ENCODE measurements at regions of chr1 and their contacts with region 1.

Region 1: DNA sequence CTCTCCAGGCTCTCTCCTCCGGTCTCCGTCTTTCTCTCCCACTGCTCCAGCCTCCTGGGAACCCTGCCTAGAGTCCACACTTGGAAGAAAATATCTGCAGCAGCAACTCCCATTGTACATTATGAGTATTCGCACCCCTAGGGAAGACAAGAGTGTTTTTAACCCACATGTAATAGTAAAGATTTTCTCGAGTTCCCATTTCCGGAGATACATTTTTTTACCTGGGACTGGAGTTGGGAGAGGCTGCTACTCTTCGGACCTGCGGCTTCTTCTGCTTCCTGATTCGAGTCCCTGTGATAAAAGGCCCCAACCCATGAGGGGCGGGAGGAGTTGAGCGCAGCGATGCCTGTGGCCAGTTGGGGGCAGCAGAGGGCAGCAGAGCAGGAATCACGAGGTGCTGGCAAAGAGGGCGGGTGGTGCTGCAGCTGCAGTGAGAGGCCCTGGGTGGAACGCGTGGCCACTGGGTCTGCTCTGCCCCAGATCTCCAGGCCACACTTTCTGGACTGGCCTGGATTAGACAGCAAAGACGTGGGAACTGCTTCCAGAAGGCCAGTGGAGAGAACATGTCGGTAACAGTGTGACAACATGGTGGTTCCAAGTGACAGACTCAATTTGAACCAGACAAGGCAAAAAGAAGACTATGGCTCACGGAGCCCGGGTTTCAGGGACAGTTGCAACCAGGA is 221.0 kb upstream of the CSF3R start:
- DNase-seq: peak in 4 of 5 donors; percentile 18 to 36 (median 26)
- H3K4me3 ChIP-seq: no peak overlapping the region
- H3K4me3 Mint-ChIP-seq: peak overlapping the region in 2 of 8 donors; percentile 14 to 43
- H3K27ac ChIP-seq: no peak overlapping the region
- H3K27ac Mint-ChIP-seq: no peak overlapping the region
- H3K4me1 ChIP-seq: no peaks in the 10 kb centered on the region
- H3K4me1 Mint-ChIP-seq: peaks cover 2 to 10% (median 7%) of the 10 kb centered on the region in 4 donors
- H3K27me3 ChIP-seq: no peaks in the 10 kb centered on the region
- H3K27me3 Mint-ChIP-seq: peaks cover 19 to 23% of the 10 kb centered on the region in 2 donors

Region 2: DNA sequence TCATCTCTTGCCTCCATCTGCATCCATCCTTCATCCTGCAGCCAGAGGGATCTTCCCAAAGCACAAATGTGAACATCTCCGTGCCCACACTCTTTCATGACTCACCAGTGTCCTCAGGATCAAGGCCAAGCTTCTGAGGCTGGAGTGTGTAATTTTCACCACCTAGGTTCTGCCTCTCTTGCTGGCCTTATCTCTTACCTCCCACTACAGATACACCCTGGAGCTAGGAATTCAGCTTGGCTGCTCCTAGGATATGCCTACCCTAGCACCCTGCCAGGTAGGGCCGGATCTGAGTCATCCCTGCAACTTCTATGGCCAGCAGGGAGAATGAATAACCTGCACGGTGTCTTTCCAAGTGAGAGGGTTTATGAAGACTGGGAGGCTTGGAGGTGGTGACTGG is 12.3 kb before region 1 on chr1:
- CTCF ChIA-PET with region 1: no interaction called
- POLR2A ChIA-PET with region 1: no interaction called
- intact Hi-C with region 1: no loop called
- DNase-seq: no peak
- H3K4me3 ChIP-seq: no peak overlapping the region
- H3K4me3 Mint-ChIP-seq: no peak overlapping the region
- H3K27ac ChIP-seq: no peak overlapping the region
- H3K27ac Mint-ChIP-seq: no peak overlapping the region
- H3K4me1 ChIP-seq: no peaks in the 10 kb centered on the region
- H3K4me1 Mint-ChIP-seq: no peaks in the 10 kb centered on the region
- H3K27me3 ChIP-seq: no peaks in the 10 kb centered on the region
- H3K27me3 Mint-ChIP-seq: peaks cover 16 to 31% of the 10 kb centered on the region in 2 donors

Region 3: DNA sequence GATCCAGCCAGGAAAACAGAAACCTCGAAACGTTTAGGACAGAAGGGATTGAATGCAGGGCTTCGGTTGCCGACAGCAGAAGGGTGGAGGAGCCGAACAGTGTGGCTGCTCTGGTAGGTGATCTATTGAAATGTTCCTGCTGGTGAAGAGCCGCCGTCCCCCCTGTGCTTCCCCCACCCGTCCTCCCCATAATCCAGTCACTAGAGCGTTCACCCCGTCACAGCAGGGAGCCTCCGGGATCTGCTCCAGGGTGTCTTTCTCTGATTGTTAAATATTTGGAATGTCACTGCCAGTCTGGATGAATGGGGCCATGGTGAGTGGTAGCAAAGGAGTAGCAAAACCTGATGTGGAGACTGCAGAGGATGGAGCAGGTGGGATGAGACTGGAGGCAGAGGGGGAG is 34.1 kb after region 1 on chr1:
- CTCF ChIA-PET with region 1: no interaction called
- POLR2A ChIA-PET with region 1: no interaction called
- intact Hi-C with region 1: no loop called
- DNase-seq: no peak
- H3K4me3 ChIP-seq: no peak overlapping the region
- H3K4me3 Mint-ChIP-seq: no peak overlapping the region
- H3K27ac ChIP-seq: no peak overlapping the region
- H3K27ac Mint-ChIP-seq: no peak overlapping the region
- H3K4me1 ChIP-seq: no peaks in the 10 kb centered on the region
- H3K4me1 Mint-ChIP-seq: no peaks in the 10 kb centered on the region
- H3K27me3 ChIP-seq: peaks cover 5% of the 10 kb centered on the region
- H3K27me3 Mint-ChIP-seq: peaks cover 23 to 40% of the 10 kb centered on the region in 2 donors

Region 4: GRCh38 chr1:37434292-37434907 is 730.7 kb after region 1 on chr1:
- CTCF ChIA-PET with region 1: interaction called, 3 read pairs
- POLR2A ChIA-PET with region 1: no interaction called
- intact Hi-C with region 1: loop called (anchors 5 kb)
- DNase-seq: peak; percentile 46 to 58 (median 56)
- H3K4me3 ChIP-seq: no peak overlapping the region
- H3K4me3 Mint-ChIP-seq: no peak overlapping the region
- H3K27ac ChIP-seq: no peak overlapping the region
- H3K27ac Mint-ChIP-seq: no peak overlapping the region
- H3K4me1 ChIP-seq: no peaks in the 10 kb centered on the region
- H3K4me1 Mint-ChIP-seq: no peaks in the 10 kb centered on the region
- H3K27me3 ChIP-seq: peaks cover 4% of the 10 kb centered on the region
- H3K27me3 Mint-ChIP-seq: peaks cover 11 to 31% of the 10 kb centered on the region in 2 donors